Ascending aorta (tissue), 2 donors: ENCODE measurements at regions of chr19 and their contacts with region 1.

Region 1: DNA sequence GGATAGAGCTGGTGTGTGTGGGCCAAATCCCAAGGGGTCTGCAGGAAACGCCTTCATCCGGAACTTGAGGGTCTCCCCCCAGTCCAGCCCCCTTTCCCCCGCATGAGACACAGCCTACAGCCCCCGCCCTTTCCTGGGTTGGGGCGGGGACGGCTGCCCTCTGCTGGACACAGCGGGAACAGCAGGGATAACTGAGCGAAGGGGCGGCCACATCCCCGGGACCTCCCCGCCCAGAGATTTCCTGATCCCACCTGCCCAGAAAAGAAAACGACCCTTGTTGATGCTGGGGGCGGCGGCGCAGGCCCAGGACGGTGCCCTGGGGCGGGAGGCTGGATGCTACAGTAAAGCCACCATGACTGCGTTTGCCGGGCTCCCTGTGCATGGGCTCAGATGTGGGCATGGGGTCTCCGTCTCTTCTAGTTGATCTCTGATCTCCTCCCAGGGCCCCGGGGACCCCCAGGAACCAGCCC is 14.2 kb downstream of the ONECUT3 start:
- DNase-seq: no peak
- H3K4me3 ChIP-seq: no peak overlapping the region
- H3K27ac ChIP-seq: no peak overlapping the region
- H3K4me1 ChIP-seq: no peaks in the 10 kb centered on the region
- H3K27me3 ChIP-seq: peaks cover 25% of the 10 kb centered on the region
- CTCF ChIP-seq: peak; percentile 87 to 95 (median 94)

Region 2: GRCh38 chr19:1672038-1672768 is 95.3 kb before region 1 on chr19:
- intact Hi-C with region 1: loop called (anchors 5 kb)
- DNase-seq: no peak
- H3K4me3 ChIP-seq: peak overlapping the region in 1 of 2 donors; percentile 11
- H3K27ac ChIP-seq: no peak overlapping the region
- H3K4me1 ChIP-seq: peaks cover 5% of the 10 kb centered on the region in 2 donors
- H3K27me3 ChIP-seq: peaks cover 31% of the 10 kb centered on the region
- CTCF ChIP-seq: peak; percentile 44 to 82 (median 81)

Region 3: DNA sequence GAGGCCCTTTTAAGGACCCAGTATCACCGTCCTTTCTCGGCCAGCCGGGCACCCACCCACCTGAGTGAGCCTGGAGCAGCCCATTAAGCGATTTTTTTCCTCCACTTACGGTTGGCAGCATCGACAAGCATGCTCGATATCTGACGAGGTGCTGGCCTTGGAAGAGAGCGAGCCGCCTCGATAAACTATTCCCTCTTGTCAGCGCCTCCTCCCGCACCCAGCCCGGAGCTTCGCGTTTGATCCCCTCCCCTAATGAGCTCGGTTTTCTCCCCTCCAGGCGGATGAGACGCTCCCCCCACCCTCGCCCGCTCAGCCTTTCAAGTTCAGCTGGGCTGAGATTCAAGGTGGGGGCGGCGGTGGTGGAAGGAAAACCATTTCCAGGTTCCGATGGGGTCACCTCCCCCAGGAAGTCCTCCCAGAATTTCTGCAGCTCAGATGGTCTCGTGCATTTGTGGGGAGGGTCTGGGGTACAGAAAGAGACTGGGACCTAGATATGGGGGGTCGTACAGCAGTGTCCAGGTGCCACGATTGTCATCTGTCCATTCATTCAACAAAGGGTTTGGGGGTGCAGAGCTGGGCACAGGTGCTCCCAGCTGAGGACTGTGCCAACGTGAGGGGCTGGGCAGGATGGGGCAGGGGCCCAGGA is 33.1 kb before region 1 on chr19:
- intact Hi-C with region 1: no loop called
- DNase-seq: no peak
- H3K4me3 ChIP-seq: no peak overlapping the region
- H3K27ac ChIP-seq: no peak overlapping the region
- H3K4me1 ChIP-seq: no peaks in the 10 kb centered on the region
- H3K27me3 ChIP-seq: no peaks in the 10 kb centered on the region
- CTCF ChIP-seq: no peak